Activated B cell treated with CpG ODN at 0.5 μM for 24 hours (primary cell): ENCODE measurements at regions of chr20 and their contacts with region 1.

Region 1: GRCh38 chr20:33810885-33811777 is at the start of gene CHMP4B:
- DNase-seq: peak; percentile 97
- ATAC-seq: peak; percentile 95
- H3K4me3 Mint-ChIP-seq: peak within 1 kb of the TSS; percentile 98
- H3K27ac Mint-ChIP-seq: peak within 1 kb of the TSS; percentile 92
- H3K4me1 Mint-ChIP-seq: peaks cover 45% of the 10 kb centered on the region
- H3K27me3 Mint-ChIP-seq: no peaks in the 10 kb centered on the region
- CTCF ChIP-seq: no peak
- total RNA-seq, gene CHMP4B: 116 and 121 TPM in 2 replicates

Region 2: GRCh38 chr20:33351696-33352095 is 459.4 kb before region 1 on chr20:
- CTCF ChIA-PET with region 1: no interaction called
- POLR2A ChIA-PET with region 1: no interaction called
- intact Hi-C with region 1: no loop called
- DNase-seq: no peak
- ATAC-seq: no peak
- H3K4me3 Mint-ChIP-seq: no peak overlapping the region
- H3K27ac Mint-ChIP-seq: no peak overlapping the region
- H3K4me1 Mint-ChIP-seq: no peaks in the 10 kb centered on the region
- H3K27me3 Mint-ChIP-seq: no peaks in the 10 kb centered on the region
- CTCF ChIP-seq: no peak

Region 3: GRCh38 chr20:33679758-33680485 is 131.2 kb before region 1 on chr20:
- CTCF ChIA-PET with region 1: no interaction called
- POLR2A ChIA-PET with region 1: interaction called, 10 read pairs
- intact Hi-C with region 1: loop called (anchors 5 kb)
- DNase-seq: no peak
- ATAC-seq: peak; percentile 86
- H3K4me3 Mint-ChIP-seq: no peak overlapping the region
- H3K27ac Mint-ChIP-seq: peak overlapping the region; percentile 35
- H3K4me1 Mint-ChIP-seq: peaks cover 43% of the 10 kb centered on the region
- H3K27me3 Mint-ChIP-seq: no peaks in the 10 kb centered on the region
- CTCF ChIP-seq: no peak

Region 4: GRCh38 chr20:33731693-33732165 is 79.4 kb before region 1 on chr20 and contains the start of gene ZNF341:
- CTCF ChIA-PET with region 1: interaction called, 6 read pairs
- POLR2A ChIA-PET with region 1: interaction called, 34 read pairs
- intact Hi-C with region 1: loop called (anchors 1 kb)
- DNase-seq: no peak
- ATAC-seq: peak; percentile 79
- H3K4me3 Mint-ChIP-seq: peak within 1 kb of the TSS; percentile 90
- H3K27ac Mint-ChIP-seq: peak within 1 kb of the TSS; percentile 93
- H3K4me1 Mint-ChIP-seq: peaks cover 26% of the 10 kb centered on the region
- H3K27me3 Mint-ChIP-seq: no peaks in the 10 kb centered on the region
- CTCF ChIP-seq: no peak
- total RNA-seq, gene ZNF341: 9.2 and 10.1 TPM in 2 replicates

Region 5: DNA sequence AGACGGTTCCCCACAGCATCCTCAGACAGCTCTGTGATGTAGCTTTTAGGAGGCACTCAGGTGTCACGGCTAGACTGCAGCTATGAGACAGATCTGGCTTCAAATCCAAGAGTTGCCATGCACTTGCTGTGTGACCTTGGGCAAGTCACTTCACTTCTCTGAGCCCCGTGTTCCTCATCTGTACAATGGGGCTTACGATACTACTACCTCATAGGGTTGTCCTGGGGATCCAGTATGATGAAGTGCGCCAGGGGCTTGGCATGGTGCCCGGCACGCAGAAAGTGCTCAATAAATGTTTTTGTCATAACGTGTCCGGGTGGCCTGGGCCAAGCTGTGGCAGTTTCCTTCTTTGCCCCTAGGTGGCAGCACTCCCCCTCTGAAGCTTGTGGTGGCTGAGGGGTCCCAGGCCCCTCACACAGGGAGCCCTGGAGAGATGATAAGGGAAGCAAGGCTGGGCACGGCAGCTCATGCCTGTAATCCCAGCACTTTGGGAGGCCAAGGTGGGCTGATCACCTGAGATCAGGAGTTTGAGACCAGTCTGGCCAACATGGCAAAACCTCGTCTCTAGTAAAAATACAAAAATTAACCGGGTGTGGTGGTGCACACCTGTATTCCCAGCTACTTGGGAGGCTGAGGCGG is 19.1 kb before region 1 on chr20:
- CTCF ChIA-PET with region 1: interaction called, 3 read pairs
- POLR2A ChIA-PET with region 1: interaction called, 4 read pairs
- intact Hi-C with region 1: loop called (anchors 2 kb)
- DNase-seq: peak; percentile 55
- ATAC-seq: peak; percentile 90
- H3K4me3 Mint-ChIP-seq: no peak overlapping the region
- H3K27ac Mint-ChIP-seq: peak overlapping the region; percentile 35
- H3K4me1 Mint-ChIP-seq: peaks cover 16% of the 10 kb centered on the region
- H3K27me3 Mint-ChIP-seq: no peaks in the 10 kb centered on the region
- CTCF ChIP-seq: peak; percentile 56

Region 6: GRCh38 chr20:33862709-33863403 is 51.7 kb after region 1 on chr20:
- CTCF ChIA-PET with region 1: no interaction called
- POLR2A ChIA-PET with region 1: no interaction called
- intact Hi-C with region 1: loop called (anchors 5 kb)
- DNase-seq: peak; percentile 54
- ATAC-seq: peak; percentile 60
- H3K4me3 Mint-ChIP-seq: no peak overlapping the region
- H3K27ac Mint-ChIP-seq: no peak overlapping the region
- H3K4me1 Mint-ChIP-seq: peaks cover 26% of the 10 kb centered on the region
- H3K27me3 Mint-ChIP-seq: no peaks in the 10 kb centered on the region
- CTCF ChIP-seq: no peak

Region 7: DNA sequence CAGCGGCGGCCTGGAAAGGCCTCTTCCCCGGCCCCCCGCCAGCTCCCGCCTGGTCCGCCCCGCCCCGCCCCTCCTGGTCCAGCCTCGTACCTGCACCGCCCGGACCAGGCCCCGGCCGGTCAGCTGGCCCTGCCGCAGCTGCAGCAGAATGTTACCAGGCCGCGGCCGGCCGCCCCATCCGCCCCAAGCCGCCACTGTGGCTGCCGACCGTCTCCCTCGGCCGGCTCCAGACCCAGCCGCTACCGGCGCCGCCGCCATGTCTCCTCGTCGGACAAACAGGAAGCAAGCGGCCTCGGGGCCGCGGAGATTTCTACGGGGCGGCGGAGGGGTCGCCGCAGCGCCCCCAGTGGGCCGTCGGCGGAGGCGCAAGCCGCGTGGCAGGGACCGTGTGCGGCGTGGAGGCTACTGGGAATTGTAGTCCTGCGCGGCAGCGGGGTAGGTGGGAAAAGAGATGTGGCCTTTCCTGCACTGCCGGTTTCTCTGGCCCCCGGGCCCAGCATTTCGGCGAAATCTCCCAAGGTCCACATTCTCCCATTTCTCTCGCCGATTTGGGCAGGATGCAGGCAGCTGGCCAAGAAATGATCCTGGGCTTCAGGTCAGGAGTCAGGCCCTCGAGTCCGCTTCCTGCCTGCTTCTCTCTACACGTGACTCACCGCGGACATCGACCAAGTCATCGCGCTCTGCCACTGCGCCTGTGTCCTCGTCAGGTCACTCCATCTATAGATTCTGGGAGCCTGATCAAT is 1281.6 kb after region 1 on chr20 and contains the start of gene TRPC4AP:
- CTCF ChIA-PET with region 1: no interaction called
- POLR2A ChIA-PET with region 1: no interaction called
- intact Hi-C with region 1: loop called (anchors 2 kb)
- DNase-seq: peak; percentile 87
- ATAC-seq: peak; percentile 97
- H3K4me3 Mint-ChIP-seq: peak within 1 kb of the TSS; percentile 95
- H3K27ac Mint-ChIP-seq: peak within 1 kb of the TSS; percentile 91
- H3K4me1 Mint-ChIP-seq: peaks cover 49% of the 10 kb centered on the region
- H3K27me3 Mint-ChIP-seq: no peaks in the 10 kb centered on the region
- CTCF ChIP-seq: peak; percentile 34
- total RNA-seq, gene TRPC4AP: 58.3 and 60.2 TPM in 2 replicates